ENCODE measurements at regions of chr3 and their contacts with region 1.

Region 1: GRCh38 chr3:183188895-183189462 is 26.4 kb upstream of the LAMP3 start:
- DNase-seq: peak; percentile 54
- ATAC-seq: peak; percentile 52
- H3K4me3 Mint-ChIP-seq: no peak overlapping the region
- H3K27ac Mint-ChIP-seq: no peak overlapping the region
- H3K4me1 Mint-ChIP-seq: peaks cover 17% of the 10 kb centered on the region
- H3K27me3 Mint-ChIP-seq: no peaks in the 10 kb centered on the region

Region 2: GRCh38 chr3:183122257-183122932 is 66.6 kb before region 1 on chr3:
- CTCF ChIA-PET with region 1: interaction called, 47 read pairs
- POLR2A ChIA-PET with region 1: no interaction called
- DNase-seq: no peak
- ATAC-seq: no peak
- H3K4me3 Mint-ChIP-seq: no peak overlapping the region
- H3K27ac Mint-ChIP-seq: no peak overlapping the region
- H3K4me1 Mint-ChIP-seq: peaks cover 5% of the 10 kb centered on the region
- H3K27me3 Mint-ChIP-seq: peaks cover 2% of the 10 kb centered on the region

Region 3: DNA sequence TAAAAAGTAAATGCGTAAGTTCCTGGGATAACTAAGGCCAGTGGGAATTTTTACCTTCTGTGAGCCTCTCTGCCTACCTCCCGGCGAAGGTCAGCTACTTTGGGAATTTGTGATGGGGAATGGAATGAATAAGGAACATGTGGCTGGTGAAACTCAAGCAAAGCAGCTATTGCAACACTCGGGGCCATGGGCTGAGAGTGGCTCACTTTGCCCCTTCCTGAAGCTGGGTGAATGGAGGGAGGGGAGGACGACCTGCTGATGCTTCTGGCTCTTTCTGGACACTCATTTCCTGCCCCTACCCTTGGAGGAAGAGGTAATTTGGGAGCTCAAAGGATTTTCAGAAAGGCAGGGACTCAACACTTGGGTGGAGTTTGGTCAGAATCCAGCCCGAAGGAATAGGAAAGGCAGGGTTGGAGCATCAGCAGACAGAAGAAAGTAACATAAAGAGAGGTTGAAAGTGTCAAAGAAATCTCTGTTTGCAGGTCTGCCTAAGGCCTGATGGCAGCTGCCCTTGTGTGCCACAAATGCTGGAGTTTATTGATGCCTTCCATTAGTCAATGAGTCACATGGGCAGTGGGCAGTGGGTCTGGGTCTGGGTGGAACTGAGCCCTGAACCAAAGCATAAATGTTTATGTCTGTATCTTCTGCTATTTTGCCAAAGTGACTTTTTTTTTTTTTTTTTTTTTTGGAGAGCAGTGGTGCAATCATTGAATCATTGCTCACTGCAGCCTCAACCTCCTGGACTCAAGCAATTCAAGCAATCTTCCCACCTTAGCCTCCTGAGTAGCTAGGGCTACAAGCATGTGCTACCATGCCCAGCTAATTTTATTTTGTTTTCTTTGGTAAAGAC is 38.9 kb before region 1 on chr3:
- CTCF ChIA-PET with region 1: no interaction called
- POLR2A ChIA-PET with region 1: no interaction called
- DNase-seq: no peak
- ATAC-seq: no peak
- H3K4me3 Mint-ChIP-seq: no peak overlapping the region
- H3K27ac Mint-ChIP-seq: no peak overlapping the region
- H3K4me1 Mint-ChIP-seq: peaks cover 2% of the 10 kb centered on the region
- H3K27me3 Mint-ChIP-seq: no peaks in the 10 kb centered on the region

Region 4: GRCh38 chr3:183208260-183208659 is 19.3 kb after region 1 on chr3:
- CTCF ChIA-PET with region 1: interaction called, 13 read pairs
- POLR2A ChIA-PET with region 1: no interaction called
- DNase-seq: no peak
- ATAC-seq: no peak
- H3K4me3 Mint-ChIP-seq: no peak overlapping the region
- H3K27ac Mint-ChIP-seq: no peak overlapping the region
- H3K4me1 Mint-ChIP-seq: peaks cover 4% of the 10 kb centered on the region
- H3K27me3 Mint-ChIP-seq: no peaks in the 10 kb centered on the region

Region 5: DNA sequence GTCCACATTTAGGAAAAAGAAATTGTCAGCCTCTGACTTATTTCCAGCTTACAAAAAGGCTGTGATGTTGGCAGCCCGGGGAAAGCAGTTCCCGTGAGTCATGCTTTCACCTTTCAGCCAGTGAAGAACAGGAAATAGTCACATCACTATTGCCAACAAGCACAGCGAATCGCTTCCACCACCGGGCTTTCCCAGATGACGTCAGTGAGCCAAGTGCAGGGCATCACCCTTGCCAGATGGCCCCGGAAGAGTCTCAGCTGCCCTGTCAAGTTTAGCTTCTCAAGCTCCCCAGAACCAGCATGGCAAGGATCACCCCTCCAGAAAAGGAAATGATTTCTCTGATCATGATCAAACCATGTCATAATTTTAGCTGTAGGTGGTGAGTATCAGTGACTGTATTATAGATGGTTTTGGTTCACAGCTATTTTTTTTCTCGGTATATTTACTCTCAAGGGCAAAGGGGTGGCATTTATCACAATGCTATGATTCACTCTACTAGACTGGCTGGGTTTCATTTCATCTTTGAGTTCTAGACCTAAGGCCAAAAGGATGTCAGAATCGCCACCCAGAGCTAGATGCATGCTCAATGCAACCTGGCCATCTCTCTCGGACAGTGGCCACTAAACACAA is 97.0 kb after region 1 on chr3:
- CTCF ChIA-PET with region 1: interaction called, 14 read pairs
- POLR2A ChIA-PET with region 1: no interaction called
- DNase-seq: peak; percentile 92
- ATAC-seq: peak; percentile 98
- H3K4me3 Mint-ChIP-seq: peak overlapping the region; percentile 22
- H3K27ac Mint-ChIP-seq: peak overlapping the region; percentile 85
- H3K4me1 Mint-ChIP-seq: peaks cover 23% of the 10 kb centered on the region
- H3K27me3 Mint-ChIP-seq: no peaks in the 10 kb centered on the region

Region 6: DNA sequence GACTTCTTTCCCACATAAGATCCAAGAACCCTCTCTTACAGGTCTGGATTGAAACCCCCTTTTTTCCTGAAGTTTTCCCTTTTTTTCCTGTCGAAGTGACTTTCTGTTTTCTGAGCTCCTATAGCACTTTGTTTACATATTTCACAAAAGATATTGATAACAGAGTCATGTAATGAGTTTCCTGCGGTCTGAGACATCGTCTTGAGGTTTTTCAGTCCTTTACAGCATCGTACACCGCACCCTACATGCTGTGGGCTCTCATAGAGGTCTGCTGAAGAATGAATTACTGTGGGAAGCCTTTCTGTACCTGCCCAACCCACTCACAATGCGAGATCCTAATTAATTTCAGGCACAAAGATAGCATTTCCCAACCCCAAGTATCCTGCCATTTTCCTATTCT is 186.4 kb after region 1 on chr3:
- CTCF ChIA-PET with region 1: interaction called, 20 read pairs
- POLR2A ChIA-PET with region 1: no interaction called
- DNase-seq: no peak
- ATAC-seq: no peak
- H3K4me3 Mint-ChIP-seq: no peak overlapping the region
- H3K27ac Mint-ChIP-seq: no peak overlapping the region
- H3K4me1 Mint-ChIP-seq: peaks cover 10% of the 10 kb centered on the region
- H3K27me3 Mint-ChIP-seq: no peaks in the 10 kb centered on the region

Measured in activated CD8-positive, alpha-beta T cell treated with anti-CD3 and anti-CD28 coated beads, Interleukin-2, amount 10 ng/mL, durations not matched to agents 7 days and 5 days (primary cell).